Calu3 (cell line): ENCODE measurements at regions of chr14 and their contacts with region 1.

Region 1: GRCh38 chr14:71380271-71380670 is 473.0 kb downstream of the PCNX1 start:
- DNase-seq: no peak
- H3K4me3 Mint-ChIP-seq: no peak overlapping the region
- H3K27ac Mint-ChIP-seq: no peak overlapping the region
- H3K4me1 Mint-ChIP-seq: peaks cover 28% of the 10 kb centered on the region
- H3K27me3 Mint-ChIP-seq: no peaks in the 10 kb centered on the region
- CTCF ChIP-seq: no peak

Region 2: GRCh38 chr14:71478542-71478941 is 98.3 kb after region 1 on chr14:
- CTCF ChIA-PET with region 1: interaction called, 10 read pairs
- intact Hi-C with region 1: no loop called
- DNase-seq: no peak
- H3K4me3 Mint-ChIP-seq: no peak overlapping the region
- H3K27ac Mint-ChIP-seq: peak overlapping the region; percentile 58
- H3K4me1 Mint-ChIP-seq: no peaks in the 10 kb centered on the region
- H3K27me3 Mint-ChIP-seq: no peaks in the 10 kb centered on the region
- CTCF ChIP-seq: no peak